ENCODE measurements at regions of chr1 and their contacts with region 1.

Region 1: DNA sequence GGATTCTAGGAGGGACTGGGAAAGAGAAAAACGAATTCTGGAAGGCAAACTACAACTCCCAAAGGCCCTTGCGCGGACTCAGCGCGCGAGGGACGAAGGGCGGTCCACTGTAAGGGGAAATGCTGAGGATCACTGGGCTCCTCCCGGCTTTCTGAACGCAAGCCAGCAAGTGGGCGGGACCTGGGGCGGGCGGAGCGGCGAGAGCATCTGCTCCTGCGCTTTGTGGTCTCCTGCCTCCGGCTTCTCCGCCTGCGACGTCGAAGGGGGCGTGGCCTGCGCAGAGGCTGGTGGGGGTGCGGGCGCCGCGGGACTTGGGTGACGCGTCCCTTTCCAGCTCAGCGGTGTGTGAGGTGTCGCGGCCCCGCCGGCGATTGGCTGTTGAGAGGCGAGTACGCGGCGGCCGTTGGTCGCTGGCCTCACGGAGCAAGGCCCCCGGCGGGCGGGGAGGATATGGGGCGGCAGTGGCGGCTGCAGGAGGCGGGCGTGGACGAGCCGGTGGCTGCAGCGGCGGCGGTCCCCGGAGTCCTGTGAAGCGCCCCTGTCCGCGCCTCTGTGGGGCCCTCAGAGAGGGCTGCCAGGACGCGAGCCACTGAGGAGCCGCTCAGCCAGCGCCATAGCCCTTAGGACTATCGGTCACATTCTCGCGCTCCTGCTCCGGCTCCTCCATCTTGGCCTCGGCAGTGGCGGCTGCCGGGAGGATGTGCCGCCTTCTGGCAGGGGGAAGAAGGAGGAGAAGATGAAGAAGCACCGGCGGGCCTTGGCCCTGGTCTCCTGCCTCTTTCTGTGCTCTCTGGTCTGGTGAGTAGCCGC is at the start of gene SUCO:
- DNase-seq: peak; percentile 98
- H3K4me3 ChIP-seq: peak within 1 kb of the TSS; percentile 93
- H3K27ac ChIP-seq: peak within 1 kb of the TSS; percentile 79
- H3K4me1 ChIP-seq: peaks cover 33% of the 10 kb centered on the region
- CTCF ChIP-seq: no peak
- total RNA-seq, gene SUCO: 19.4 and 22.9 TPM in 2 replicates

Region 2: GRCh38 chr1:171741872-171742576 is 790.9 kb before region 1 on chr1 and contains the start of gene VAMP4:
- CTCF ChIA-PET with region 1: no interaction called
- POLR2A ChIA-PET with region 1: no interaction called
- intact Hi-C with region 1: loop called (anchors 5 kb)
- DNase-seq: peak; percentile 90
- H3K4me3 ChIP-seq: peak within 1 kb of the TSS; percentile 85
- H3K27ac ChIP-seq: peak within 1 kb of the TSS; percentile 66
- H3K4me1 ChIP-seq: peaks cover 30% of the 10 kb centered on the region
- CTCF ChIP-seq: no peak
- total RNA-seq, gene VAMP4: 3.2 and 3.4 TPM in 2 replicates

Region 3: DNA sequence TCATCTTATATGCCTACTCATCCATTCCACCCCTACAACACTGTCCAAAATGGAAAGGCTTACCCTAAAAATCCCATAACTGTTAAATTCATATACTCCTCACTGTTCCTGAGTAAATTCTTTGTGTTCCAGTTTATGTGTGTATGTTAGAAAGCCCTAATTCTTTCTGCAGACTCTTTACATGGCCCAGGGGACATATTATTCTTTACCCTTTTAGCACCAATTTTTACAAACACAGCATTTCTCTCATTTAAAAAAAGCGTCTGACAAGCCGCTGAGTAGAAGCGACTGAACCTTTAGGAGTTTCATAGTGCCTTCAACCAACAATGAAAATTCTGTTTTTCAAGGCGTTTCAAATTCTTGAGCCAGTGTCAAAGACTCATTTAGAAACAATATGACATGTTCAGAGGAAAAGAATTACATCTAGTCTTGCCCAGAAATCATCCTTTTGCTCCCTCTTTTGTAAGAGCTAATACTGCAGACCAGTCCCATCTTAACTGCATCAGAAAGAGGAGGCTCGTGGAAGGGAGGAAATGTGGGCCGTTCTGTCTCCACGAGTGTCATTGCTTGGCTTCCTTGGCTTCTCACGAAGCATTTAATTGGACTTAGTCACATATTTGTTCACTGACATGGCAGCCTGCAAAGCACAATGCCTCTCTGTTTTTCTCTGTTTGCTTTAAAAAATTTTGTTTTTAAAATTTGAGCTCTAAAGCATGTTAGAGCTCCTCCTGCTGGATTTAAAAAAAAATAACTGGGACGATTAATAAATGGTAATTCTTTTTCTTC is 133.7 kb before region 1 on chr1:
- CTCF ChIA-PET with region 1: no interaction called
- POLR2A ChIA-PET with region 1: no interaction called
- intact Hi-C with region 1: loop called (anchors 5 kb)
- DNase-seq: peak; percentile 48
- H3K4me3 ChIP-seq: peak overlapping the region; percentile 42
- H3K27ac ChIP-seq: no peak overlapping the region
- H3K4me1 ChIP-seq: peaks cover 13% of the 10 kb centered on the region
- CTCF ChIP-seq: peak; percentile 90

Region 4: GRCh38 chr1:172818841-172819527 is 286.1 kb after region 1 on chr1:
- CTCF ChIA-PET with region 1: no interaction called
- POLR2A ChIA-PET with region 1: no interaction called
- intact Hi-C with region 1: loop called (anchors 5 kb)
- DNase-seq: peak; percentile 91
- H3K4me3 ChIP-seq: peak overlapping the region; percentile 59
- H3K27ac ChIP-seq: peak overlapping the region; percentile 88
- H3K4me1 ChIP-seq: peaks cover 53% of the 10 kb centered on the region
- CTCF ChIP-seq: no peak

Region 5: GRCh38 chr1:173409613-173410012 is 876.7 kb after region 1 on chr1:
- CTCF ChIA-PET with region 1: no interaction called
- POLR2A ChIA-PET with region 1: no interaction called
- intact Hi-C with region 1: loop called (anchors 5 kb)
- DNase-seq: peak; percentile 76
- H3K4me3 ChIP-seq: peak overlapping the region; percentile 41
- H3K27ac ChIP-seq: peak overlapping the region; percentile 96
- H3K4me1 ChIP-seq: peaks cover 100% of the 10 kb centered on the region
- CTCF ChIP-seq: no peak

Region 6: GRCh38 chr1:173867753-173868265 is 1334.9 kb after region 1 on chr1 and contains the start of gene GAS5:
- CTCF ChIA-PET with region 1: no interaction called
- POLR2A ChIA-PET with region 1: no interaction called
- intact Hi-C with region 1: loop called (anchors 5 kb)
- DNase-seq: peak; percentile 99
- H3K4me3 ChIP-seq: peak within 1 kb of the TSS; percentile 98
- H3K27ac ChIP-seq: peak within 1 kb of the TSS; percentile 91
- H3K4me1 ChIP-seq: peaks cover 61% of the 10 kb centered on the region
- CTCF ChIP-seq: no peak
- total RNA-seq, gene GAS5: 899 and 1,026 TPM in 2 replicates